Left lung (tissue), 14 donors: ENCODE measurements at regions of chr1 and their contacts with region 1.

Region 1: DNA sequence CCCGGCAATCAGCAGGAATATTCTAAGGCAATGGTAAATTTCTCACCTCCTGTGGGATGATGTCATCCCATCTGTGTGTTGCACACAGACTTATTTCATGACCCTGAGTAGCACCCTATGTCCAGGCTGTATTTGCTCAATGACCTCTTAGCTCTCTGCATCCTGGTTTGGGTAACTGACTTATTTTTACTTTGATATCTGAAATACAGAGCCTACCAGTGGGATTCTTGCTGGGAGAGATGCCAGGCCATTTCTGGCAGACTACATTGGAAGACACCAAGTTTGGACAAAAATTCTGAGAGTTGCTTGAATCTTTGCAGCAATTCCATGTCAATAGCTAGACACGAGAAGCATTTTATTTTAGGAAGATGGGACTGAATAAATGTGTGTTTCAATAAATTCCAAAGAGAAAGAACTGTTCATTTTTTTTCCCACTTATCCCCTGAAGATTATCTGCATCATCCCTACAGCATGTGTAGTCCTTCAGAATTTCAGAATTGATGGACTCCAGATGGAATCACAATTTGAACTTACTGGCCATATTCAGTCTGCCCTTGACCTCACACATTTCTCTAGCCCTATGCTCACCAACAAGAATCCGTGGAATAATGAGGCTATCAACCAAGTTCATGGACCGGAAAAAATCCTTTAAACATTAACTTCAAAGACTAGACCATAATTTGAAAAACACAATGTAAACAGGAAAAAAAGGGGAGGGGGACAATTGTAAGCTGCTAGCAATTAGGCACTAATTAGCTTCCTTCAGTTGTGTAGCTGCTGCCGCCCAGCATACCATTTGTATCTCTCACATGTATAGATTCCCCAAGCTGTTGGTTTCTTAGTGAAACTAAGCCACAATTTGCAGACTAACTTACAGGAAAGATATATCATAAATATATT is 226.5 kb downstream of the HMCN1 start:
- DNase-seq: peak in 1 of 4 donors; percentile 21
- ATAC-seq: peak; percentile 44
- H3K4me3 ChIP-seq: no peak overlapping the region
- H3K27ac ChIP-seq: peak overlapping the region in 1 of 2 donors; percentile 26
- H3K4me1 ChIP-seq: peaks cover 0 to 9% of the 10 kb centered on the region in 2 donors
- H3K27me3 ChIP-seq: no peaks in the 10 kb centered on the region
- CTCF ChIP-seq: no peak

Region 2: GRCh38 chr1:184025242-184025675 is 1935.4 kb before region 1 on chr1:
- intact Hi-C with region 1: loop called in 1 of 2 experiments (anchors 10 kb)
- DNase-seq: peak in 1 of 4 donors; percentile 56
- ATAC-seq: peak; percentile 71
- H3K4me3 ChIP-seq: no peak overlapping the region
- H3K27ac ChIP-seq: no peak overlapping the region
- H3K4me1 ChIP-seq: peaks cover 0 to 4% of the 10 kb centered on the region in 2 donors
- H3K27me3 ChIP-seq: no peaks in the 10 kb centered on the region
- CTCF ChIP-seq: no peak

Region 3: DNA sequence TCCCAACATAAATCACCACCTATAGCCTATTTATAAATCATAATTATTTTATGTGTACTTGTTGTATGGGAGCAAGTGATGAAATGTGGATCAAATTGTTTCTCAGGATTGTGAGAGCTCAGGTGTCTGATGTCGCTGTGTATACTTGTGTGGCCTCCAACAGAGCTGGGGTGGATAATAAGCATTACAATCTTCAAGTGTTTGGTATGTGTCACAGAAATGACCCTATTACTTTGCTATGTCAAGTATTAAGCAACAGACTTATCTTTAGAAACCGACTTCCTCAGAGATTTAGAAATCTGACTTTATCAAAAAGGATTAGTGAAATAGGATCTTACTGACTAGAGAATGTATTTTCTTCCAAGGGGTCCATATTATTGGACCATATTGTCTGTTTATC is 133.5 kb after region 1 on chr1:
- intact Hi-C with region 1: no loop called
- DNase-seq: no peak
- ATAC-seq: peak; percentile 95
- H3K4me3 ChIP-seq: no peak overlapping the region
- H3K27ac ChIP-seq: peak overlapping the region in 1 of 2 donors; percentile 49
- H3K4me1 ChIP-seq: peaks cover 0 to 12% of the 10 kb centered on the region in 2 donors
- H3K27me3 ChIP-seq: no peaks in the 10 kb centered on the region
- CTCF ChIP-seq: no peak